Activated naive CD4-positive, alpha-beta T cell treated with anti-CD3 and anti-CD28 coated beads for 36 hours (primary cell): ENCODE measurements at regions of chr15 and their contacts with region 1.

Region 1: GRCh38 chr15:50908210-50909009 is at the start of gene AP4E1:
- DNase-seq: peak; percentile 94
- H3K4me3 Mint-ChIP-seq: peak within 1 kb of the TSS; percentile 92
- H3K27ac Mint-ChIP-seq: peak within 1 kb of the TSS; percentile 99
- H3K4me1 Mint-ChIP-seq: peaks cover 25% of the 10 kb centered on the region
- H3K27me3 Mint-ChIP-seq: no peaks in the 10 kb centered on the region
- total RNA-seq, gene AP4E1: 6.8 to 9.4 TPM

Region 2: GRCh38 chr15:49620658-49621368 is 1287.6 kb before region 1 on chr15 and contains the starts of genes DTWD1 and FAM227B:
- CTCF ChIA-PET with region 1: no interaction called
- intact Hi-C with region 1: loop called (anchors 1 kb)
- DNase-seq: peak; percentile 96
- H3K4me3 Mint-ChIP-seq: peak within 1 kb of the TSS; percentile 88
- H3K27ac Mint-ChIP-seq: peak within 1 kb of the TSS; percentile 91
- H3K4me1 Mint-ChIP-seq: peaks cover 33% of the 10 kb centered on the region
- H3K27me3 Mint-ChIP-seq: no peaks in the 10 kb centered on the region
- total RNA-seq, gene DTWD1: 18.5 to 19.4 TPM
- total RNA-seq, gene FAM227B: 2.0 to 2.8 TPM

Region 3: DNA sequence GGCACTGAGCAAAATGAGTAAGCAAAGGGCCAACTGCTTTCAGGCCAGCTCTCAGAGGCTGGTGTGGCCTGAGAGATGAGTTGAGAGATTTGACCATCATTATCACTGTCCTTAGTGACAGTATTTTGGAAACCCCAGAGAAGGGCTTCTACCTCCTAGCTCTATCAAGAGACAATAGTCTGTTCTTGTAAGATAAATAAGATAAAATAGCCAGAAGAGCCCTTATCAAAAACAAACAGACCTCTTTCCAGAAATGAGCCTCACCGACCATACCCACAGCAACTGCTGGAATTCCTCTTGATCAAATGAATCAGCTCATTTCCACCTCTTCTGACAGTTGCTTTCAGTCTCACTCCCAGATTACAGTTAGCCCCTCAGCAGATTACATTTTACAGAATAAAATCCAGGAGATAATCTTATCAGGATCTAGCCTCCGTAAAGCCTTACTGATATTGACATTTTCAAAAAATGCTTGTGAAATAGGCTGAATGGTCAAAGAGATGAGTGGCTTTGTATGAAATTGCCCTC is 647.4 kb before region 1 on chr15:
- CTCF ChIA-PET with region 1: no interaction called
- intact Hi-C with region 1: loop called (anchors 1 kb)
- DNase-seq: no peak
- H3K4me3 Mint-ChIP-seq: peak overlapping the region; percentile 52
- H3K27ac Mint-ChIP-seq: peak overlapping the region; percentile 98
- H3K4me1 Mint-ChIP-seq: peaks cover 73% of the 10 kb centered on the region
- H3K27me3 Mint-ChIP-seq: no peaks in the 10 kb centered on the region

Region 4: DNA sequence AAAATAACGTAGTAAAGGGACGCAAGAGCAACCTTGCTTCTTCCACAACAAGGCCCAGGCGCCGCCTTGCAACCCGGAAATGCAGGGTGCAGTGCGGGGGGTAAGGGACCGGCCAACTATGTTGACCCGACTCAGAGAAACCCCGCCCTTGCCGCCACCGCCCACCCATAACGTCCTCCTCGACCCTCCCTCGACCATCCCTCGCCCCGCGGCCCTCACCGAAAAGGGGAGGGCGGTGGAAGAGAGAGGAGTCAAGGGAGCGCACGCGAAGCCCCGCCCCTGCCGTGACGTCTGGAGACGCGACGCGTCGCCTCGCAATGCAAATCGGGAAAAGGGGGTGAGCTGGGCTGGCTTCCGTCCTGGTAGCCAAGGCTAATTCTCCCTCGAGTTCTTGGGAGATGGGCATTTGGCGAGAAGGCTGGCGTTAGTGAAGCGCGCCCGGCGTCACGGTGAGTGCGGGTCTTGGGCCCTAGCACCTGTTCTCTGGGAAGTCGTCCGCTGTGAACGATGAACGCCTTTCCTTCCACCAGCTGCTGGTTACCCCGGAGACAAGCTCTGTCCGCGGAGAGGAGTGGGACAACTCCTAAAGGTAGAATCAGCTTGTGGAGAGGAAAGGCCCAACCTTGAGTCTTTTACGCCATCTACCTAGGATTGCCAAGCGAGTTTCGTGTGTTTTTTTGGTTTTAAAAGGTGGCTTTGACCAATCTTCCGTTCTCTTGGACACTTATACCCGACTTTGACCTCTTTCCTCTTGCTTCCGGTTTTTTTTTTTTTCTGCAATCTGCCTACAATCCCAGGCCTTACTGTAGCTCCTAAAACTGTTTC is 484.1 kb before region 1 on chr15 and contains the start of gene USP8:
- CTCF ChIA-PET with region 1: no interaction called
- intact Hi-C with region 1: loop called (anchors 1 kb)
- DNase-seq: peak; percentile 96
- H3K4me3 Mint-ChIP-seq: peak within 1 kb of the TSS; percentile 94
- H3K27ac Mint-ChIP-seq: peak within 1 kb of the TSS; percentile 92
- H3K4me1 Mint-ChIP-seq: peaks cover 30% of the 10 kb centered on the region
- H3K27me3 Mint-ChIP-seq: no peaks in the 10 kb centered on the region
- total RNA-seq, gene USP8: 31.6 TPM

Region 5: GRCh38 chr15:50675536-50676144 is 232.8 kb before region 1 on chr15:
- CTCF ChIA-PET with region 1: interaction called, 3 read pairs
- intact Hi-C with region 1: loop called (anchors 1 kb)
- DNase-seq: no peak
- H3K4me3 Mint-ChIP-seq: no peak overlapping the region
- H3K27ac Mint-ChIP-seq: no peak overlapping the region
- H3K4me1 Mint-ChIP-seq: peaks cover 31% of the 10 kb centered on the region
- H3K27me3 Mint-ChIP-seq: no peaks in the 10 kb centered on the region

Region 6: GRCh38 chr15:50876989-50877360 is 31.4 kb before region 1 on chr15:
- CTCF ChIA-PET with region 1: interaction called, 12 read pairs
- intact Hi-C with region 1: loop called (anchors 1 kb)
- DNase-seq: peak; percentile 85
- H3K4me3 Mint-ChIP-seq: peak overlapping the region; percentile 75
- H3K27ac Mint-ChIP-seq: peak overlapping the region; percentile 46
- H3K4me1 Mint-ChIP-seq: peaks cover 53% of the 10 kb centered on the region
- H3K27me3 Mint-ChIP-seq: peaks cover 4% of the 10 kb centered on the region